ENCODE measurements at regions of chr6 and their contacts with region 1.

Region 1: DNA sequence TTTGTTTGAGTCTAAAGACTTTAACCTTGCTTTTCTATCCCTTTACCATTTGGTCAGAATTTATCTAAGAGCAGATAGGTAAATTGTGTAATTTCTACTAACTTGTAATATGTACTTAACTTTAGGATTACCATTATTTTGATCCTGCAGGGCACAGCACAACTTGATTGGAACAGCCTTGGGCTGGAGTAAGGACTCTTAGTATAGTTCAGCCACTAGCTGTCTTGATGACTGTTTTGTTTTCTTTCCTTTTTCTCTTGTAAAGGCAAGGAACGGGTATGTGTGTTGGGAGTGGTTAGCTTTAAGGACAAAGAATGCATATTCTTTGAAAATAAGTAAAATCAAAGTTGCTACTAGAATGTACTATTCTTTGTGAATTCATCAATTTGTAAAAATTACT is 203.2 kb downstream of the ZFAND3 start:
- DNase-seq: no peak
- H3K4me3 ChIP-seq: no peak overlapping the region
- H3K4me3 Mint-ChIP-seq: no peak overlapping the region
- H3K27ac ChIP-seq: no peak overlapping the region
- H3K27ac Mint-ChIP-seq: no peak overlapping the region
- H3K4me1 ChIP-seq: peaks cover 2% of the 10 kb centered on the region
- H3K4me1 Mint-ChIP-seq: peaks cover 29 to 42% (median 35%) of the 10 kb centered on the region in 4 donors
- H3K27me3 ChIP-seq: no peaks in the 10 kb centered on the region
- H3K27me3 Mint-ChIP-seq: no peaks in the 10 kb centered on the region

Region 2: GRCh38 chr6:38034274-38034914 is 11.7 kb after region 1 on chr6:
- CTCF ChIA-PET with region 1: interaction called, 12 read pairs
- POLR2A ChIA-PET with region 1: interaction called, 4 read pairs
- intact Hi-C with region 1: no loop called
- DNase-seq: peak in 1 of 5 donors; percentile 2
- H3K4me3 ChIP-seq: no peak overlapping the region
- H3K4me3 Mint-ChIP-seq: peak overlapping the region in 3 of 8 donors; percentile 3 to 26 (median 11)
- H3K27ac ChIP-seq: no peak overlapping the region
- H3K27ac Mint-ChIP-seq: peak overlapping the region in 2 of 7 donors; percentile 13 to 20
- H3K4me1 ChIP-seq: peaks cover 23% of the 10 kb centered on the region
- H3K4me1 Mint-ChIP-seq: peaks cover 42 to 78% (median 58%) of the 10 kb centered on the region in 4 donors
- H3K27me3 ChIP-seq: no peaks in the 10 kb centered on the region
- H3K27me3 Mint-ChIP-seq: no peaks in the 10 kb centered on the region

Measured in CD4-positive, alpha-beta memory T cell (primary cell).